A673 (cell line): ENCODE measurements at regions of chr13 and their contacts with region 1.

Region 1: GRCh38 chr13:59542303-59542702 is 621.4 kb downstream of the DIAPH3 start:
- DNase-seq: peak; percentile 95
- H3K4me3 ChIP-seq: no peak overlapping the region
- H3K27ac ChIP-seq: peak overlapping the region; percentile 92
- H3K4me1 ChIP-seq: peaks cover 53% of the 10 kb centered on the region
- H3K27me3 ChIP-seq: no peaks in the 10 kb centered on the region
- CTCF ChIP-seq: no peak

Region 2: GRCh38 chr13:58978331-58978730 is 564.0 kb before region 1 on chr13:
- CTCF ChIA-PET with region 1: no interaction called
- POLR2A ChIA-PET with region 1: no interaction called
- intact Hi-C with region 1: loop called (anchors 10 kb)
- DNase-seq: no peak
- H3K4me3 ChIP-seq: no peak overlapping the region
- H3K27ac ChIP-seq: no peak overlapping the region
- H3K4me1 ChIP-seq: peaks cover 6% of the 10 kb centered on the region
- H3K27me3 ChIP-seq: no peaks in the 10 kb centered on the region
- CTCF ChIP-seq: no peak

Region 3: GRCh38 chr13:59435024-59435423 is 107.3 kb before region 1 on chr13:
- CTCF ChIA-PET with region 1: no interaction called
- POLR2A ChIA-PET with region 1: no interaction called
- intact Hi-C with region 1: no loop called
- DNase-seq: no peak
- H3K4me3 ChIP-seq: no peak overlapping the region
- H3K27ac ChIP-seq: no peak overlapping the region
- H3K4me1 ChIP-seq: no peaks in the 10 kb centered on the region
- H3K27me3 ChIP-seq: no peaks in the 10 kb centered on the region
- CTCF ChIP-seq: no peak

Region 4: GRCh38 chr13:59477011-59477410 is 65.3 kb before region 1 on chr13:
- CTCF ChIA-PET with region 1: no interaction called
- POLR2A ChIA-PET with region 1: no interaction called
- intact Hi-C with region 1: loop called (anchors 2 kb)
- DNase-seq: no peak
- H3K4me3 ChIP-seq: no peak overlapping the region
- H3K27ac ChIP-seq: no peak overlapping the region
- H3K4me1 ChIP-seq: peaks cover 55% of the 10 kb centered on the region
- H3K27me3 ChIP-seq: no peaks in the 10 kb centered on the region
- CTCF ChIP-seq: peak; percentile 56

Region 5: DNA sequence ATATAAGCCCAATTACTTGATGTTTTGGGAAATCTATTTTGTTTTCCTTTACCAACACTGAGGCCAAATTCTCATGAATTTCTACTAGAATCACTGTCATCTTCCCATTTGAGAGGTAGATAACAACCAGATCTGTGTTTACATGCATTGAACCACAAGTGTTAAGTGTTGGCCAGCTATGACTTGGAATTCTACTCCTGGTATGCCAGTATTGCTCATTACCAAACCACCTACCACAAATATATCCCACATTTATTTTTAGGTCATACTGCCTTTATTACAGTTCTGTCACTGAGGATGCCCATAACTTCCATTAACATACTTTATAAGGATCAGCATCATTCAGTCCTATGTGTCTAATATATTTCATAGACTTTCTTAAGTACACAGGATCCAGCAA is 292.5 kb after region 1 on chr13:
- CTCF ChIA-PET with region 1: no interaction called
- POLR2A ChIA-PET with region 1: no interaction called
- intact Hi-C with region 1: loop called (anchors 10 kb)
- DNase-seq: no peak
- H3K4me3 ChIP-seq: no peak overlapping the region
- H3K27ac ChIP-seq: peak overlapping the region; percentile 77
- H3K4me1 ChIP-seq: peaks cover 54% of the 10 kb centered on the region
- H3K27me3 ChIP-seq: no peaks in the 10 kb centered on the region
- CTCF ChIP-seq: no peak

Region 6: DNA sequence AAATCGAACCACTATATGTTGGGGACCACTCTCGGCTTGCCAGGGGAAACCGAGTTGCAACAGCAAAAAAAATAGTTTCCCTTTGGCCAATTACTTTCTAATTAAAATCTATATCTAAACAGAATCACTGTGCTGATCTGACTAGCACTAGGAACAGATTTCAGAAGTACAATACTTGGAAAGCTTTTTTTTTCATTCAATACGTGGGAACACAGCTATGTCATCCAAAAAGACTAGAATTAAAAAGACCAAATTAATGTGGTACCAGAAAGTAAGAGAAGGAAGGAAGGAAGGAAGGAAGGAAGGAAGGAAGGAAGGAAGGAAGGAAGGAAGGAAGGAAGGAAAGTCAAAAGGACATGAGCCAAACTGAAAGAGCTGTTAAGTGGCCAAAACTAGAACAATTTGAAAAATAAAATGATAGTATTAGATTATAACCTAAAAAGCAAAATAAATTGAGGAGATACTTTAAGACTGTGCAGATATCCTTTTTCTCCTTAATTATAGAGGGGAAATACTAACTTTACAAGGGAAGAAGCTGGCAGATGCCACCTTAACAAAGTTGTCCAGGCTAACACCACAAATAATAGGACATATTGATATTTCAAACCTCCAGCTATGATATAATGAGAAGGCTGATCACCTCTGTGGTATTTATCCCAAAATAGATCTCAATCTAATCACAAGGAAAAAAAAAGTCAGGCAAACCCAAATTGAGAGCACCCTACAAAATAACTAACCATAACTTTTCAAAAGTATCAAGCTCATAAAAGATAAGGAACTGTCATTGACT is 557.5 kb after region 1 on chr13:
- CTCF ChIA-PET with region 1: no interaction called
- POLR2A ChIA-PET with region 1: no interaction called
- intact Hi-C with region 1: loop called (anchors 1 kb)
- DNase-seq: peak; percentile 96
- H3K4me3 ChIP-seq: peak overlapping the region; percentile 5
- H3K27ac ChIP-seq: peak overlapping the region; percentile 100
- H3K4me1 ChIP-seq: peaks cover 94% of the 10 kb centered on the region
- H3K27me3 ChIP-seq: no peaks in the 10 kb centered on the region
- CTCF ChIP-seq: no peak